Endothelial cell of umbilical vein (primary cell): ENCODE measurements at regions of chr2 and their contacts with region 1.

Region 1: GRCh38 chr2:159286709-159287441 is 372 bp upstream of the WDSUB1 start:
- DNase-seq: peak; percentile 96
- H3K4me3 ChIP-seq: peak overlapping the region; percentile 60 to 73 (median 61)
- H3K27ac ChIP-seq: peak overlapping the region; percentile 68
- H3K4me1 ChIP-seq: peaks cover 7% of the 10 kb centered on the region
- H3K27me3 ChIP-seq: no peaks in the 10 kb centered on the region
- CTCF ChIP-seq: no peak
- POLR2A ChIP-seq: peak; percentile 96

Region 2: DNA sequence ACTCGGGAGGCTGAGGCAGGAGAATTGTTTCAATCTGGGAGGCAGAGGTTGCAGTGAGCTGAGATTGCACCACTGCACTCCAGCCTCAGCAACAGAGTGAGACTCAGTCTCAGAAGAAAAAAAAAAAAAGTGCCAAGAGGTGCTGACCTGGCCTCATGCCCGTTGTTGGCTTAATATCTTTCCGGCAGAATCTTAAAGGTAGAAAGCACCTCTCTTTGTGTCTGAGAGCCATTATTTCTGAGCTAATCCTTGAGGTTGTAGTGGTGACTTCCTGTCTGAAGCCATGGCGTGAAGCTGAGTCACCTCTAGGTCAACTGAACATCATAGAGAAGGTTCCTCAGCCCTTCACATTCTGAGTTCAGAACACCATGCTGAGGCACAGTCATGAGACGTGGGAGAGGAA is 60.8 kb before region 1 on chr2:
- CTCF ChIA-PET with region 1: no interaction called
- POLR2A ChIA-PET with region 1: no interaction called
- dilution Hi-C with region 1: no loop called
- intact Hi-C with region 1: loop called (anchors 1 kb)
- DNase-seq: peak; percentile 57
- H3K4me3 ChIP-seq: no peak overlapping the region
- H3K27ac ChIP-seq: peak overlapping the region; percentile 78
- H3K4me1 ChIP-seq: peaks cover 27% of the 10 kb centered on the region
- H3K27me3 ChIP-seq: no peaks in the 10 kb centered on the region
- CTCF ChIP-seq: no peak
- POLR2A ChIP-seq: no peak

Region 3: DNA sequence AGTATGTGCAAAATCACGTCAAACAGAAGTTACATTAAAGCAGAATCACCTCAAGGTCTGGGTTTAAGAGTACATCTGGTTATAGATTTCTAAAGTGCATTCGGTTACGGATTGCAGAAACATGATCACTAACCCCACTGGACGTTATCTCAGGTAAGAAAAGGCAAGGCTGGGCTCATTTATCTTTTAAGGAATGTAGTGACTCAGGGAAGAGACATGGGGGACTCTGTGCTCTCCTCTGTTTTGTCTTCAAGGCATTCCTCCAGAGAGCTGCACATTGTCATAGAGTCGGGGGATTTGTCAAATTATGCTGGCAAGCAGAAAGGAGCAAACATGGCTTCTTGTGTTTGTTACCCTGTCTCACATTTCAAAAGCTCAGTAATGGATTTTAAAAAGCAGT is 14.7 kb before region 1 on chr2:
- CTCF ChIA-PET with region 1: interaction called, 12 read pairs
- POLR2A ChIA-PET with region 1: no interaction called
- dilution Hi-C with region 1: no loop called
- intact Hi-C with region 1: no loop called
- DNase-seq: no peak
- H3K4me3 ChIP-seq: no peak overlapping the region
- H3K27ac ChIP-seq: no peak overlapping the region
- H3K4me1 ChIP-seq: peaks cover 7% of the 10 kb centered on the region
- H3K27me3 ChIP-seq: no peaks in the 10 kb centered on the region
- CTCF ChIP-seq: no peak
- POLR2A ChIP-seq: no peak

Region 4: DNA sequence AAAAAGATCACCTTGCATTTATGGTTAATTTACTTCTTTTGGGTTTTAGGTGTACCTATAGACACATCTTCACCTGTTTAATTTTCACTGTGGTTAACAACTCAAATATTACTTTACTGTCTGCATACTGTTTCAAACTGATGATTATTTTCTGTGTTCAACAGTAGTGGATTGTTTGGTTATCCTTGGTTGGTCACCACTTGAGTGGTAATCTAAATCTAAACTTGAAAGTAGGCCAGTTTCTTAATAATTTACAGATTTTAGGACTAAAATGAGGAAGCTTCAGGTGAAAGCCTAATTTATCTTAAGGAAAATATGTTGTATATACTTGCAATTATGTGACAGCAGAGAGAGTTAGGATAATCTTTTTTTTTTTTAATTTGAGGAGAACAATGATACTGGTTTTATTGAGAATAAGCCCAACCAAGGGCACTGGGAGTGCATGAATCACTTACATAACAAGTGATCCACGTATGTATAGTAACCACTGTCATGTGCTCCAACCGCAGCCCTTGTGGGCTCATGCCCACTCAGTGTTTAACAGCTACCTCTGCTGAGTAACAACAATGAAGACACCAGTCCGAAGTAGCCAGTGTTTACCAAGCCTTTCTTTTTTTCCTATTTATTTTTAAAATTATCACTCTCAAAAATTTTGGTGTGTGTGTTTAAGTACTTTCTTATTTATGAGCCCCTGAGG is 30.7 kb after region 1 on chr2:
- CTCF ChIA-PET with region 1: no interaction called
- POLR2A ChIA-PET with region 1: no interaction called
- dilution Hi-C with region 1: no loop called
- intact Hi-C with region 1: no loop called
- DNase-seq: no peak
- H3K4me3 ChIP-seq: no peak overlapping the region
- H3K27ac ChIP-seq: no peak overlapping the region
- H3K4me1 ChIP-seq: no peaks in the 10 kb centered on the region
- H3K27me3 ChIP-seq: no peaks in the 10 kb centered on the region
- CTCF ChIP-seq: no peak
- POLR2A ChIP-seq: no peak